CD4-positive, alpha-beta memory T cell (primary cell): ENCODE measurements at regions of chr7 and their contacts with region 1.

Region 1: DNA sequence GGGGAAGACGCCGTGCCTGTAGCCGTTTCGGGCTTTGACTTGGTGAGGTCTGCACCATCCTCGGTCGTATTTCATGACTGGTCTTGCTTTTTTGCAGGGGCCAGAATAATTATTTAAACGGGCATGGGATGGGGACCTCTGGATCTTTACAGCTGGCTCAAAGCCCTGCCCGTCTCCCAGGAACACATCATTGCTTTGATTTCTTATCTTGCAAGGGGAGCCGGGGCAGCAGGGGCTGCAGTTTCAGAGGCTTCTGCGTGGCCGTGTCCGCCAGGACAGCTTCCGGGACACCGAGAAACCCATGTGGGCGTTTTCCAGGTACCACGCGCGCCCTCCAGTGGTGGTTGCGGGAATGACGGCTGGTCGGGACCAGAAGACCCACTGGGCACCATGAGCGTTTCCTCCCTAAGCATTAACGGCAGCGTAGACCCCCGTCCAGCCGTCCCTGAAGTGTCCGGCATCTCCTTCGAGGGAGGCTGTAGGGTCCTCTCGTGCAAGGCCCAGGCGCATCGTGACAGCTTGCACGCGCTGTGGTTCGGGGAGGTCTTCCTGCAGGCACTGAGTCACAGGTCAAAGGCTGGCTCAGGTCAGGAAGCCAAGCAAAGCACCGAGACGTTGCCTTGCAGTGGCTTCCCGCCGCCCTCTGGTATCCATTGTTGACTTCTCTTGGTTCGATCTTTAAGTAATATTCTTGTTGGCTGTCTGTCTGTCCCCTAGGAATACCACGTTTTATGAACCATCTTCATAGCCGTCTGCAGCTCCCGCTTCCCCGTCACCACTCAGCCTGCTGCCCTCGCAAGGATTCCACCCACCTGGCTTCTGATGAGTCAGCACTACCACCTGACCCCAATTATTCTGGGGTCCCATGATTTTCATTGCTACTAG is 16.2 kb upstream of the ZFAND2A start:
- DNase-seq: peak; percentile 61 to 73 (median 67)
- H3K4me3 ChIP-seq: peak overlapping the region; percentile 36 to 49
- H3K4me3 Mint-ChIP-seq: peak overlapping the region in 6 of 8 donors; percentile 65 to 83 (median 72)
- H3K27ac ChIP-seq: no peak overlapping the region
- H3K27ac Mint-ChIP-seq: peak overlapping the region in 1 of 7 donors; percentile 40
- H3K4me1 ChIP-seq: peaks cover 11% of the 10 kb centered on the region
- H3K4me1 Mint-ChIP-seq: peaks cover 6 to 14% (median 11%) of the 10 kb centered on the region in 4 donors
- H3K27me3 ChIP-seq: no peaks in the 10 kb centered on the region
- H3K27me3 Mint-ChIP-seq: peaks cover 6 to 7% of the 10 kb centered on the region in 2 donors

Region 2: GRCh38 chr7:888081-888997 is 287.9 kb before region 1 on chr7:
- CTCF ChIA-PET with region 1: no interaction called
- POLR2A ChIA-PET with region 1: no interaction called
- intact Hi-C with region 1: no loop called
- DNase-seq: no peak
- H3K4me3 ChIP-seq: no peak overlapping the region
- H3K4me3 Mint-ChIP-seq: no peak overlapping the region
- H3K27ac ChIP-seq: no peak overlapping the region
- H3K27ac Mint-ChIP-seq: peak overlapping the region in 2 of 7 donors; percentile 53 to 59
- H3K4me1 ChIP-seq: no peaks in the 10 kb centered on the region
- H3K4me1 Mint-ChIP-seq: peaks cover 7 to 14% (median 10%) of the 10 kb centered on the region in 4 donors
- H3K27me3 ChIP-seq: no peaks in the 10 kb centered on the region
- H3K27me3 Mint-ChIP-seq: no peaks in the 10 kb centered on the region

Region 3: DNA sequence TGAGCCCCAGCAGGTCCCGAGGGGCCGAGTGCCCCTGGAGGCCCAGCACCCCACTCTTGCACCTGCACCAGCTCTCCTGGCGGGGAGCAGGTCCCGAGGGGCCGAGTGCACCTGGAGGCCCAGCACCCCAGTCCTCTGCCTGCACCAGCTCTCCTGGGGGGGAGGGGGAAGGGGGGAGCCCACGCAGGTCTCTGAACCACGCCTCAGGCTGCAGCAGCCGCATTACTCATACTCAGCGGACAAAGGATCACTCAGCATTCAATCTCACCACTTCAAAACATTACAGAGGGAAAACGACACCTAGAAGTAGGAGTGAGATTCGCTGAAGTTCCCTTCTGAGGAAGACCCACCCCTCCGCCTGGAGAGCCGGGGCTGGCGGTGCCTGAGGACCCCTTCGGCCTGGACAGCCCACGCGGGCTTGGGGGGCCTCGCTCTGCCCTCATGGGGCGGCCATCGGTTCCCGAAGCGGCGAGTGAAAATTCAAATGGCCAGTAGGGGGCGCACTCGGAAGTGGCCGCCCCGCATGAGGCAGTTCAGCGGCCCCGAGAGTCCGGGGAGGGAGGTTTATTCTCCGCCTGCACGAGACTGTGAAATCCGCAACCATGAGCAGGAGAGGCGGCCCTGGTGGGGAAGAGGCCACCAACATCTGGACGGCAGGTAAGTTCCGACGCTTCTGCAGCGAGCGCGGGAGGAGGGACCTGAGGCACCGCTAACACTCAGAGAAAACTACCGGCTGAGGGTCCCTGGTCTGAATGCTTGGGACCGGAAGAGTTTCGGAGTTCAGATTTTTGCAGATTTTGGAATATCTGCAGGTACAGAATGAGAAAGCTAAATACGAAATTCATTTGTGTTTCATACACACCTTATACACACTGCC is 89.4 kb before region 1 on chr7:
- CTCF ChIA-PET with region 1: interaction called, 22 read pairs
- POLR2A ChIA-PET with region 1: no interaction called
- intact Hi-C with region 1: loop called (anchors 1 kb)
- DNase-seq: peak; percentile 56 to 67 (median 59)
- H3K4me3 ChIP-seq: peak overlapping the region in 1 of 2 donors; percentile 21
- H3K4me3 Mint-ChIP-seq: peak overlapping the region; percentile 65 to 79 (median 70)
- H3K27ac ChIP-seq: no peak overlapping the region
- H3K27ac Mint-ChIP-seq: peak overlapping the region in 2 of 7 donors; percentile 36 to 47
- H3K4me1 ChIP-seq: peaks cover 10% of the 10 kb centered on the region
- H3K4me1 Mint-ChIP-seq: peaks cover 8 to 14% (median 9%) of the 10 kb centered on the region in 4 donors
- H3K27me3 ChIP-seq: no peaks in the 10 kb centered on the region
- H3K27me3 Mint-ChIP-seq: no peaks in the 10 kb centered on the region

Region 4: DNA sequence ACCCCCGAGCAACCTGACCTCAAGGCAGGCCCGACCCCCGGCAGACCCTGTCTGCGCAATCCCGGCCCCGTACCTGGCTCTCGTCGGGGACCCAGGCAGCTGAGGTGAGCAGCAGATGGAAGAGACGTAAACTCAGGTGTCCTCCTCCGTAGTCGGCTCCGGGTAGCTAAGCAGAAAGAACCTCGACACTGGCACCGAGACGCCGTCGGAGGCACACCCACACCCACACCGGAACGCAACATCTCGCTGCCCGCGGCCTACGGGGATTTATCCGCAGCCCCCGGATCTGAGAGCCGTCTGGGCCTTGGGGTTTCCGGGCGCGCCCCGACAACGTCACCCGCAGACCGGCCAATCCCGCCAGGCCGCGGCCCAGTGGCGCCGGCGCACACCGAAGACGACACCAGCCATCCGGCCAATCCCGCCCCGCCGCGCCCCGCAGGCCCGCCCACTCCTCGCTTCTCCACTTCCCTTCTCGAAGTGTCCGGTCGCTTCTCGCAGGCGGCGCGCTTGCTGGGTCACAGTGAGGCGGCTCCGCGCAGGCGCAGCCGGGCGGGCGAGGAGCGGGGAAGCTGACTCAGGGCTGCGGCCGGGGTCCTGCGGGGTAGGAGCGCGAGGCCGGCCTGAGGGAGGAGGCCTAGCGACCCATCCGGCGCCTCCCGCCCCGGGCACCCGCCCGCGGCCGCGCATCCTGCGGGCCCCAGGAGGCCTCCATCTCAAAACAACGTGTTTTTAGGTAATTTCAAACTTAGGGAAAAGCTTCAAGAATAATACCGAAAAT is 16.1 kb before region 1 on chr7 and contains the start of gene ZFAND2A:
- CTCF ChIA-PET with region 1: interaction called, 12 read pairs
- POLR2A ChIA-PET with region 1: interaction called, 4 read pairs
- intact Hi-C with region 1: loop called (anchors 2 kb)
- DNase-seq: peak; percentile 97 to 98 (median 98)
- H3K4me3 ChIP-seq: peak within 1 kb of the TSS; percentile 69 to 99
- H3K4me3 Mint-ChIP-seq: peak within 1 kb of the TSS; percentile 88 to 94 (median 90)
- H3K27ac ChIP-seq: peak within 1 kb of the TSS; percentile 90
- H3K27ac Mint-ChIP-seq: peak within 1 kb of the TSS; percentile 79 to 98 (median 95)
- H3K4me1 ChIP-seq: peaks cover 29% of the 10 kb centered on the region
- H3K4me1 Mint-ChIP-seq: peaks cover 15 to 30% (median 23%) of the 10 kb centered on the region in 4 donors
- H3K27me3 ChIP-seq: no peaks in the 10 kb centered on the region
- H3K27me3 Mint-ChIP-seq: no peaks in the 10 kb centered on the region
- total RNA-seq, gene ZFAND2A: 30.9 to 32.4 TPM

Region 5: DNA sequence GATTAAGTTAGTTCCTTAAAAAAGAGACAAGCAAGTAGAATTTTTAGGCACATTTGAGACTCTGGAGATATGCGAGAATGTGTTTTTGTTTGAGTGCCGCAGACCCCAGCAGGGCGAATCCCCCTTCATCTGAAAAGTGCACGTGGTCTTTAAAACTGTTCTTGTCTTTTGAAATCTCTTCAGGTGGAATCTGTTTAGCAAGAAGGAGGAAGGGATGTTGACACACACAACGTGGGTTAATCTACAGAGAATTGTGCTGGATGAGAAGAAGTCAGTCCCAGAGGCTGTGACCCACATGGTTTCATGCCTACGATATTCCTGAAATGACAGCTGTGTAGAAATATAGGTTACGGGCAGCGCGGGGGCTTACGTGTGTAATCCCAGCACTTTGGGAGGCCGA is 10.9 kb after region 1 on chr7:
- CTCF ChIA-PET with region 1: interaction called, 24 read pairs
- POLR2A ChIA-PET with region 1: no interaction called
- intact Hi-C with region 1: no loop called
- DNase-seq: no peak
- H3K4me3 ChIP-seq: no peak overlapping the region
- H3K4me3 Mint-ChIP-seq: no peak overlapping the region
- H3K27ac ChIP-seq: no peak overlapping the region
- H3K27ac Mint-ChIP-seq: no peak overlapping the region
- H3K4me1 ChIP-seq: peaks cover 3% of the 10 kb centered on the region
- H3K4me1 Mint-ChIP-seq: peaks cover 0 to 5% (median 4%) of the 10 kb centered on the region in 4 donors
- H3K27me3 ChIP-seq: no peaks in the 10 kb centered on the region
- H3K27me3 Mint-ChIP-seq: peaks cover 21 to 25% of the 10 kb centered on the region in 2 donors

Region 6: GRCh38 chr7:1193593-1194424 is 17.6 kb after region 1 on chr7:
- CTCF ChIA-PET with region 1: interaction called, 24 read pairs
- POLR2A ChIA-PET with region 1: no interaction called
- intact Hi-C with region 1: no loop called
- DNase-seq: no peak
- H3K4me3 ChIP-seq: no peak overlapping the region
- H3K4me3 Mint-ChIP-seq: no peak overlapping the region
- H3K27ac ChIP-seq: no peak overlapping the region
- H3K27ac Mint-ChIP-seq: no peak overlapping the region
- H3K4me1 ChIP-seq: peaks cover 8% of the 10 kb centered on the region
- H3K4me1 Mint-ChIP-seq: peaks cover 0 to 12% (median 8%) of the 10 kb centered on the region in 4 donors
- H3K27me3 ChIP-seq: no peaks in the 10 kb centered on the region
- H3K27me3 Mint-ChIP-seq: peaks cover 6 to 14% of the 10 kb centered on the region in 2 donors